H1 (cell line): ENCODE measurements at regions of chr11 and their contacts with region 1.

Region 1: DNA sequence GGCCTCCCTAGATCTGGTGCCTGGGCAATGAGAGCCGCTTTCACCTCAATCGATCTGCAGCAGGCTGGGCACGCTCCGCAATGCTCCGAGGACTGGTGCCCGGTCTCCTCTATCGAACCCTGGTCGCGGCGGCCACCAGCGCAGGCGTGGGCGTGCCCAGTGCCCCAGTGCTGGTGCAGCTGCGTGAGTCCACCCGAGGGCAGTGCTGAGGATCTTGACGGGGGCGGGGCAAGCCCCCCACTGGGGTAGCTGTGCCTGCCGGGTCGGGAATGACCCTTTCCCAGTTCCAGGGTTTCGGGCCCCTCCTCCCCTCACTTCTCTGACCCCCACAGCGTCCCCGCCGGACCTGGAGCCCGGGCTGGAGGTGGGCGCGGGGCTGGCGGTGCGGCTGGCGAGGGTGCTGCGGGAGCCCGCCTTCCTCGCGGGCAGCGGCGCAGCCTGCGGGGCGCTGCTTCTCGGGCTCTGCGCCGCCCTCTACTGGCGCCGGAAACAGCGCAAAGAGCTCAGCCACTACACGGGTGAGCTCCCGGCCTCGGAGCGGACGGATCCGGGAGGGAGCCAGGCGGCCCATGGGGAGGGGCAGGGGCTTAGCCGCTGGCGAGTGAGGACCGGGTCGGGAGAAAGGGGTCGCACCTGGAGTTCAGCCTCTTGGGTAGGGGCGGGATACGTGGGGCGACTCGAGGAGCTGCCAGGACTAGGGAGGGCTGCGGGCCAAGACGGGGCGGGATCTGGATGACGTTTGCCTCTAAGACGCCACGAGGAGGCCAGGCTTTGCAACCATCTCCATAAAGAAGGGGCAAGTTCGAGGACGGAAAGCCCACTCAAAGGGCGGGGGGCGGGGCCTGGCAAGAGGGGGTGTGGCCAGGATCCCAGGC is 10.9 kb downstream of the ROBO3 start:
- DNase-seq: peak; percentile 78 to 93
- H3K4me3 ChIP-seq: peak overlapping the region; percentile 56 to 76 (median 62)
- H3K27ac ChIP-seq: peak overlapping the region; percentile 54; the same call in 1 of the 2 replicates
- H3K4me1 ChIP-seq: peaks cover 0 to 12% (median 8%) of the 10 kb centered on the region in 4 experiments; a peak in 5 of 7 replicates
- H3K27me3 ChIP-seq: peaks cover 5 to 48% (median 41%) of the 10 kb centered on the region in 4 experiments
- CTCF ChIP-seq: peak; percentile 65 to 77 (median 75)
- EP300 ChIP-seq: no peak
- POLR2A ChIP-seq: peak in 1 of 2 experiments; percentile 17; a peak in 1 of 3 replicates
- RAD21 ChIP-seq: peak in 1 of 2 experiments; percentile 37; a peak in 2 of 4 replicates

Region 2: GRCh38 chr11:124663861-124664260 is 212.3 kb before region 1 on chr11:
- CTCF ChIA-PET with region 1: no interaction called
- POLR2A ChIA-PET with region 1: no interaction called
- DNase-seq: no peak
- H3K4me3 ChIP-seq: no peak overlapping the region
- H3K27ac ChIP-seq: no peak overlapping the region
- H3K4me1 ChIP-seq: no peaks in the 10 kb centered on the region
- H3K27me3 ChIP-seq: peaks cover 0 to 7% (median 0%) of the 10 kb centered on the region in 4 experiments; a peak in 3 of 7 replicates
- CTCF ChIP-seq: no peak
- EP300 ChIP-seq: no peak
- POLR2A ChIP-seq: no peak
- RAD21 ChIP-seq: no peak

Region 3: GRCh38 chr11:124732230-124732629 is 143.9 kb before region 1 on chr11:
- CTCF ChIA-PET with region 1: no interaction called
- POLR2A ChIA-PET with region 1: no interaction called
- DNase-seq: no peak
- H3K4me3 ChIP-seq: no peak overlapping the region
- H3K27ac ChIP-seq: no peak overlapping the region
- H3K4me1 ChIP-seq: no peaks in the 10 kb centered on the region
- H3K27me3 ChIP-seq: peaks cover 3 to 23% (median 12%) of the 10 kb centered on the region in 4 experiments; a peak in 6 of 7 replicates
- CTCF ChIP-seq: no peak
- EP300 ChIP-seq: no peak
- POLR2A ChIP-seq: no peak
- RAD21 ChIP-seq: no peak

Region 4: DNA sequence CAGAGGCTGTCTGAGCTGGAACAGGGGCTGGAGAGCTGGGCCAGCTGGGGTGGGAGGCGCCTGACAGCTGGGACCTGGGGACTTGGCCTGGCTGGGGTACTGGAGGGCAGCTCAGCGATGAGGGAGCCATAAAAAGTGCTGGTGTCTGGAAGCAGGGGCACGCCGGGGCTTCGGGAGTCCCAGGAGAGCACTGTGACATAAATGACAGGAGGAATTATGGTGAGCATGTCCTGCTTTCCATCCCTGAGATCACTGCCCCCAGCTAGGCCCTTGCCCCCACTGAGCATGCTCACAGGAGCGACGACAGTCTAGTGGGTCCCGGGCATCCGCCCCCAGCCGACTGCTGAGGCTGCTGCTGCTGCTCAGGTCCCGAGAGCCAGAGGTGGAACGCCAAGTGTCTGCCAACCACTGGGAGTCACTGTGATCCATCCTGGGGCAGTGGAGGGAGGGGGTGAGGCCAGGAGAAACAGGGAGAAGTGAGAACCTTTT is 15.2 kb after region 1 on chr11:
- CTCF ChIA-PET with region 1: interaction called, 22 read pairs
- POLR2A ChIA-PET with region 1: interaction called, 7 read pairs
- DNase-seq: peak in 1 of 2 experiments; percentile 51
- H3K4me3 ChIP-seq: no peak overlapping the region
- H3K27ac ChIP-seq: no peak overlapping the region
- H3K4me1 ChIP-seq: no peaks in the 10 kb centered on the region; a peak in 1 of 7 replicates
- H3K27me3 ChIP-seq: peaks cover 0 to 3% (median under 1%) of the 10 kb centered on the region in 4 experiments; a peak in 2 of 7 replicates
- CTCF ChIP-seq: peak; percentile 42 to 65 (median 50)
- EP300 ChIP-seq: no peak
- POLR2A ChIP-seq: no peak
- RAD21 ChIP-seq: peak; percentile 40 to 52

Region 5: DNA sequence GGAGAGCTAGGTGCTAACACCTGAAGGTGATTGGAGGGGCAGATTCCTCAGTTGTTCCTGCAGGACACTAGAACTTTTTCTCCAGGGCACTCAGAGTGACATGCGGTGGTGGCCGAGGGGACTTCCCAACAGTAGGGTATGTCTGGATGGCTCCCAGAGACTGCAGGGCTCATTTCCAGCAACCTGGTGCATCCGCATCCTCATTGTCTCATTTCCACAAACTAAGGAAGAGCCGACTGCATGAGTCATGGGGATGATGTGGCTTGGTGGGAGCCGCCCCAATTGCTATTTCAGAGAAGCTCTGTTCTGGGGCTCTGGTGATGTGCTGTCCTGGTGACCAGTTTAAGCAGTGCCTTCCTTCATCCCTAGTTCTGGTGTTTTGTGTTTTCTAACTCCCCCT is 24.3 kb after region 1 on chr11:
- CTCF ChIA-PET with region 1: interaction called, 12 read pairs
- POLR2A ChIA-PET with region 1: interaction called, 4 read pairs
- DNase-seq: peak in 1 of 2 experiments; percentile 43
- H3K4me3 ChIP-seq: no peak overlapping the region
- H3K27ac ChIP-seq: no peak overlapping the region
- H3K4me1 ChIP-seq: peaks cover 0 to 2% (median 1%) of the 10 kb centered on the region in 4 experiments; a peak in 3 of 7 replicates
- H3K27me3 ChIP-seq: peaks cover 0 to 6% (median 0%) of the 10 kb centered on the region in 4 experiments; a peak in 3 of 7 replicates
- CTCF ChIP-seq: no peak
- EP300 ChIP-seq: no peak
- POLR2A ChIP-seq: no peak
- RAD21 ChIP-seq: no peak